Mammary epithelial cell (primary cell): ENCODE measurements at regions of chr10 and their contacts with region 1.

Region 1: DNA sequence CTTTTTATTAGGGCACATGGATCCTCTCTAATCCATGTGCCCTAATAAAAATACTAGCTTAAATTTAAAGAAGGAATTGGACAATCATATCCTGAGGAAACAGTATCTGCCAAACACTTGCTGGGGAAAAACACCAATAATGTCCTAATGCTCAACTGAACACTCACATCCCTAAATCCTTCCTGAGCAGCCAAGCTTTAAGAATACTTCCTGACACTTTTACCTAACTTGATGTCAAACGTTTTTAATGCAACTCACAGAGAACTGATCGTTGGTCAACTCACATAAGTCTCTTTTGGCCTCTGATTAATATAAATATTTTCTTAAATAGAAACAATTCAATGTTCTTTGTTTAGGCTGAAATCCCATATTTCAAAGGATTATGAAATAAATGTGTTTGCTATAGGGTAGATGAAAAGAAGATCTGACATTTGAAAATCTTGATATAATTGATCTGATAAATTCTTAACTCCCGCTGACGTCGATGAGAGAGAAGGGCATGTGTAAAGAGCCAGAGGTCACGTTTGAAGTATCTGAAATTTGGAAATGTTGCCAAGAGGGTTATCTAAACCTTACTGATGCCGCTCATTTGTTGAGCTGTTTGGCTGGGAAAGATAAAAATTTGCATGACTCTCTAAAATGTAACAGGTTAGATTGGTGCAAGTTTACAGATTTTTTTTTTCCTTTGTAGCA is 122.8 kb upstream of the RHOBTB1 start:
- DNase-seq: no peak
- H3K4me3 ChIP-seq: no peak overlapping the region
- H3K27ac ChIP-seq: no peak overlapping the region
- H3K4me1 ChIP-seq: no peaks in the 10 kb centered on the region
- H3K27me3 ChIP-seq: peaks cover 3% of the 10 kb centered on the region
- CTCF ChIP-seq: no peak

Region 2: DNA sequence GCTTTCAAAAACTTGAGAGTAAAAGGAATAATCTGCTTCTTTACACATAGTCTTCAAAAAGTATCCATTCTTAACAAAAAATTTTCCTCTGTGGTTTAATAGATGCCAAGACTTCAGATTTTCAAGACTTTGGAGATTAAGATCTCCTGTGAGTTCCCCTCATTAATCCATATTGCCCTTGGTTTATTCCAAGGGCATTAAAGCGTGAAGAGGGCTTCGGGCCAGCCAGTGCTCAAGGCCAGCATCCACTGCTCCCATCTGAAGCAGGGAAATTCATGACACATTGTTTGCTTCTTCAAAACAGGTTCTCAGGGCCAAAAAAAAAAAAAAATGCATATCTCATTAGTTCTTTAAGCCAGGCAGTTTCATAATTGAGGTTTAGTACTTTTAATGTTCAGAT is 14.5 kb after region 1 on chr10:
- CTCF ChIA-PET with region 1: no interaction called
- dilution Hi-C with region 1: no loop called
- in situ Hi-C with region 1: no loop called
- intact Hi-C with region 1: loop called (anchors 1 kb)
- DNase-seq: no peak
- H3K4me3 ChIP-seq: no peak overlapping the region
- H3K27ac ChIP-seq: no peak overlapping the region
- H3K4me1 ChIP-seq: no peaks in the 10 kb centered on the region
- H3K27me3 ChIP-seq: peaks cover 3% of the 10 kb centered on the region
- CTCF ChIP-seq: no peak